ENCODE measurements at regions of chr18 and their contacts with region 1.

Region 1: GRCh38 chr18:48161191-48161910 is 230.9 kb upstream of the SMAD2 start:
- DNase-seq: peak; percentile 97
- H3K4me3 ChIP-seq: peak overlapping the region; percentile 64 to 71
- H3K27ac ChIP-seq: peak overlapping the region in 1 of 2 experiments; percentile 92; a peak in 2 of 4 replicates
- H3K4me1 ChIP-seq: peaks cover 0 to 73% of the 10 kb centered on the region in 2 experiments; a peak in 2 of 4 replicates
- H3K27me3 ChIP-seq: peaks cover 10% of the 10 kb centered on the region; the same call in 1 of the 2 replicates
- CTCF ChIP-seq: no peak
- EP300 ChIP-seq: no peak
- RAD21 ChIP-seq: no peak

Region 2: GRCh38 chr18:48017635-48018034 is 143.7 kb before region 1 on chr18:
- CTCF ChIA-PET with region 1: no interaction called
- POLR2A ChIA-PET with region 1: no interaction called
- DNase-seq: no peak
- H3K4me3 ChIP-seq: no peak overlapping the region
- H3K27ac ChIP-seq: no peak overlapping the region
- H3K4me1 ChIP-seq: peaks cover 0 to 18% of the 10 kb centered on the region in 2 experiments; a peak in 1 of 4 replicates
- H3K27me3 ChIP-seq: peaks cover 22% of the 10 kb centered on the region
- CTCF ChIP-seq: no peak
- EP300 ChIP-seq: no peak
- RAD21 ChIP-seq: no peak

Region 3: GRCh38 chr18:48045759-48046158 is 115.6 kb before region 1 on chr18:
- CTCF ChIA-PET with region 1: no interaction called
- POLR2A ChIA-PET with region 1: no interaction called
- DNase-seq: no peak
- H3K4me3 ChIP-seq: no peak overlapping the region
- H3K27ac ChIP-seq: no peak overlapping the region
- H3K4me1 ChIP-seq: peaks cover 0 to 25% of the 10 kb centered on the region in 2 experiments; a peak in 1 of 4 replicates
- H3K27me3 ChIP-seq: no peaks in the 10 kb centered on the region
- CTCF ChIP-seq: no peak
- EP300 ChIP-seq: no peak
- RAD21 ChIP-seq: no peak

Region 4: DNA sequence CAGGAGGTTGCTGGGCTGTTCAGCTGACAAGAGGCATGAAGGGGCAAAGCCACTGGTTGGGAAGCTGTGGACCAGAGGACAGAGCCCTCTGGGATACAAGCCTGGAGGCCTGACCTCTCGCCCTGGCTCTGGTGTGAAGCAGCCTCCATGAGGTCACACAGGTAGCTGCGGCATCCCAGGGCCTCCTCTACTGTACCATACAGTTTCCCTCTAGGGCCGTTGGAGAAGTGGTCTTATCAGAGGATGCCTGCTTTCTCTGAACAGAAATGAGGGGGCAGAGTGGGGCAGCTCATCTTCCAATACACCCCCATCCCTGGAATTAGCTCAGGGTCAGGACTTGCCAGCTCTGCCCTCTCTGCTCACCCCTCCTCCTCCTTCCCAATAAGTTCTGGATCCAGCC is 95.8 kb before region 1 on chr18:
- CTCF ChIA-PET with region 1: interaction called, 5 read pairs
- POLR2A ChIA-PET with region 1: interaction called, 13 read pairs
- DNase-seq: peak; percentile 46
- H3K4me3 ChIP-seq: no peak overlapping the region
- H3K27ac ChIP-seq: peak overlapping the region in 1 of 2 experiments; percentile 100; a peak in 2 of 4 replicates
- H3K4me1 ChIP-seq: peaks cover 0 to 48% of the 10 kb centered on the region in 2 experiments; a peak in 2 of 4 replicates
- H3K27me3 ChIP-seq: no peaks in the 10 kb centered on the region
- CTCF ChIP-seq: no peak
- EP300 ChIP-seq: no peak
- RAD21 ChIP-seq: no peak

Region 5: DNA sequence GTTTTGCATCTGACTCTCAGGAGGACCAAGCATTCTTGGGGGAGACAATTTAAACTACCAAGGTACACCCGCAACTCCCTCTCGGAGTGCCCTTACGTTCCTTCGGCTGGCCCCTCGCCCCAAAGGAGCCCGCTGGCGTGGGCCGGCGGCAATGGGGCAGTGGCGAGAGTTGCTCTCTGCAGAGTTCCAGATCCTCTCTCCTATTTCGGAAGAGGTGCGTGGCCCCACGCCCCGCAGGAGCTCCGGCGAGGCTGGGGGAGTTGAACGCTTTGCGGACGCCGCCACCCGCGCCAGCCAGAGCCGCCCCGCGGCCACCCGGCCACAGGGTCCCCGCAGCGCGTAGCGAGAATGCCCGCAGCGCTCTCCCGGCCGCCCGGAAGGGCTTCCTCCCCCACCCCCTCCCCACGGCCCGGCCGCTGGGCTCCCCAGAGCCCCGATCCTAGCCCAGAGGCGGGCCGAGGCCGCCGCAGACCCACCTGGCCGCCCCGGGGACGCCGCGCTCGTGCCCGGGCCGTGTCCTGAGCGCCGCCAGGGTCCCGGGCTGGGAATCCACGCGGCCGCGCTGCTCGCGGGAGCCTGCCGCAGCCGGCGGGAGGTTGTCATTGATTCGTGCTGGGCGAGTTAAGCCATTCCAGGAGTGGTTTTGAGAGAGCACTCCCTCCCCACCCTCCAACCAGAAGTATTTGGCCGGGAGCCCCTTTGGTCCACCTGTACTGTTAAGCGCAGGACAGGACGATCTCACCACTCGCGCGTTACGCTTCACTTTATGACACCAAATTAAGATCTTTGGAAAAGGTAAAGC is 24.6 kb before region 1 on chr18:
- CTCF ChIA-PET with region 1: interaction called, 15 read pairs
- POLR2A ChIA-PET with region 1: interaction called, 7 read pairs
- DNase-seq: peak; percentile 86
- H3K4me3 ChIP-seq: peak overlapping the region; percentile 41 to 47; a peak in 3 of 4 replicates
- H3K27ac ChIP-seq: peak overlapping the region in 1 of 2 experiments; percentile 86; a peak in 2 of 4 replicates
- H3K4me1 ChIP-seq: peaks cover 0 to 72% of the 10 kb centered on the region in 2 experiments; a peak in 2 of 4 replicates
- H3K27me3 ChIP-seq: peaks cover 54% of the 10 kb centered on the region
- CTCF ChIP-seq: no peak
- EP300 ChIP-seq: no peak
- RAD21 ChIP-seq: no peak